Aorta (tissue), 5 donors: ENCODE measurements at regions of chr10 and their contacts with region 1.

Region 1: GRCh38 chr10:14801723-14802122 is 27.0 kb upstream of the FAM107B start:
- DNase-seq: no peak
- ATAC-seq: no peak
- H3K4me3 ChIP-seq: no peak overlapping the region
- H3K27ac ChIP-seq: no peak overlapping the region
- H3K4me1 ChIP-seq: peaks cover 0 to under 1% of the 10 kb centered on the region in 2 donors
- H3K27me3 ChIP-seq: no peaks in the 10 kb centered on the region

Region 2: GRCh38 chr10:14723052-14723689 is 78.6 kb before region 1 on chr10:
- intact Hi-C with region 1: no loop called
- DNase-seq: no peak
- ATAC-seq: no peak
- H3K4me3 ChIP-seq: no peak overlapping the region
- H3K27ac ChIP-seq: no peak overlapping the region
- H3K4me1 ChIP-seq: peaks cover 0 to 3% of the 10 kb centered on the region in 2 donors
- H3K27me3 ChIP-seq: no peaks in the 10 kb centered on the region

Region 3: DNA sequence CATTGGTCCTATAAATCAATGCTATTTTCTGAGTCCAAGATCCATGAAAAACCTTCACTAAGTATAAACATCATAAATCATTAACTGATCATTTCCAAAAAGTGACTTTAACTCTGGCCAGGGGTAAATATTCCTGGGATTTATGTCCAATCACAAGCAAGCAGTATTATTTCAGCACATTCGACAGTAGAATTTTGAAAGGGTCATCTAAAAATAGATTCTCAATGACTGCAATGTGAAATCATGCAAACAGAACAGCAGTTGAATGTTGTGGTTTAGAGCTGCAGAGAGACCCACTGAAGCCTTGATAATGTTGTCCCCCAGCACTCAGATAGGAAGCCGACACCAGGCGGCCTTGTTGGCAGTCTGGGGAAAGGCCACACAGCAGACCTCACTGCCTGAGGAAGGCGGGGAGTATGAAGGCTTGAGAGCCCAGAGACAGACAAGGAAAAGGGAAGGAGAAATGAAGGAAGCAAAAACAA is 65.1 kb before region 1 on chr10:
- intact Hi-C with region 1: no loop called
- DNase-seq: no peak
- ATAC-seq: peak; percentile 62
- H3K4me3 ChIP-seq: no peak overlapping the region
- H3K27ac ChIP-seq: peak overlapping the region; percentile 73 to 77
- H3K4me1 ChIP-seq: peaks cover 0 to 3% of the 10 kb centered on the region in 2 donors
- H3K27me3 ChIP-seq: no peaks in the 10 kb centered on the region

Region 4: DNA sequence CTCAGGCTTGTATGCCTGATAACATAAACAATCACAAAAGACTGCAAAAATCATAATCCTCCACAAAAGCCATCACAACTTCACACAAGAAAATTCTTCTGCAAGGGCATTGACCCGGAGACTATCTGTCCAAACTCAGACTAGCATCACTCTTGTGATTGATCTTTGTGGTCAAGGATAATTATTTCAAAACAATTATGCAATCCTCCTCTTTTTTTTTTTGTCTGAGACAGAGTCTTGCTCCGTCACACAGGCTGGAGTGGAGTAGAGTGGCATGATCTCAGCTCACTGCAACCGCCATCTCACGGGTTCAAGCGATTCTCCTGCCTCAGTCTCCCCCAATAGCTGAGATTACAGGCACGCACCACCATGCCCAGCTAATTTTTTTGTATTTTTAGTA is 14.0 kb after region 1 on chr10:
- intact Hi-C with region 1: loop called in 1 of 2 experiments (anchors 2 kb)
- DNase-seq: no peak
- ATAC-seq: no peak
- H3K4me3 ChIP-seq: no peak overlapping the region
- H3K27ac ChIP-seq: no peak overlapping the region
- H3K4me1 ChIP-seq: no peaks in the 10 kb centered on the region
- H3K27me3 ChIP-seq: no peaks in the 10 kb centered on the region